CD4-positive, alpha-beta T cell (primary cell): ENCODE measurements at regions of chr22 and their contacts with region 1.

Region 1: DNA sequence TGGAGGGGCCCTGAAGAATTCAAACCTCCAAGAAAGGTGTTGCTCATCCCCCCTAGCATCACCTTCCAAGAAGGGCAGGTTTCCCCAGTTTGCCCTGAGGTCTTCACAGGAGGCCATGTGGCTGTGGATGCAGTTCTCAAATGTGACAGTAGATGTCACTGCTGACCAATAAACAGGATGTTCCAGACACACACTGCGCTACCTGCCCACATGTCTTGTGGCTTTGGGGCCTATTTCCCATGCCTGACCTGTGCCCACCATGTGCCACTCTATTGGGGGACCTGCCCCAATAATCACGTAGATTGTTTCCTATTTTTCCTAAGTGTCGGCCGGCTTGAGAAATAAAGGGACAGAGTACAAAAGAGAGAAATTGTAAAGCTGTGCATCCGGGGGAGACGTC is 4.5 kb downstream of the GSTT2 start:
- DNase-seq: peak in 10 of 14 experiments; percentile 6 to 84 (median 62)
- ATAC-seq: peak; percentile 86
- H3K4me3 ChIP-seq: no peak overlapping the region
- H3K4me3 Mint-ChIP-seq: no peak overlapping the region
- H3K27ac ChIP-seq: no peak overlapping the region
- H3K27ac Mint-ChIP-seq: no peak overlapping the region
- H3K4me1 ChIP-seq: no peaks in the 10 kb centered on the region
- H3K4me1 Mint-ChIP-seq: no peaks in the 10 kb centered on the region
- H3K27me3 ChIP-seq: no peaks in the 10 kb centered on the region
- H3K27me3 Mint-ChIP-seq: peaks cover 4% of the 10 kb centered on the region
- CTCF ChIP-seq: peak; percentile 50

Region 2: GRCh38 chr22:23938328-23939016 is 46.0 kb before region 1 on chr22:
- CTCF ChIA-PET with region 1: no interaction called
- POLR2A ChIA-PET with region 1: no interaction called
- intact Hi-C with region 1: loop called in 1 of 2 experiments (anchors 5 kb)
- DNase-seq: no peak
- ATAC-seq: no peak
- H3K4me3 ChIP-seq: no peak overlapping the region
- H3K4me3 Mint-ChIP-seq: no peak overlapping the region
- H3K27ac ChIP-seq: no peak overlapping the region
- H3K27ac Mint-ChIP-seq: no peak overlapping the region
- H3K4me1 ChIP-seq: no peaks in the 10 kb centered on the region
- H3K4me1 Mint-ChIP-seq: no peaks in the 10 kb centered on the region
- H3K27me3 ChIP-seq: no peaks in the 10 kb centered on the region
- H3K27me3 Mint-ChIP-seq: no peaks in the 10 kb centered on the region
- CTCF ChIP-seq: no peak